Activated CD8-positive, alpha-beta T cell treated with anti-CD3 and anti-CD28 coated beads for 36 hours (primary cell): ENCODE measurements at regions of chr1 and their contacts with region 1.

Region 1: DNA sequence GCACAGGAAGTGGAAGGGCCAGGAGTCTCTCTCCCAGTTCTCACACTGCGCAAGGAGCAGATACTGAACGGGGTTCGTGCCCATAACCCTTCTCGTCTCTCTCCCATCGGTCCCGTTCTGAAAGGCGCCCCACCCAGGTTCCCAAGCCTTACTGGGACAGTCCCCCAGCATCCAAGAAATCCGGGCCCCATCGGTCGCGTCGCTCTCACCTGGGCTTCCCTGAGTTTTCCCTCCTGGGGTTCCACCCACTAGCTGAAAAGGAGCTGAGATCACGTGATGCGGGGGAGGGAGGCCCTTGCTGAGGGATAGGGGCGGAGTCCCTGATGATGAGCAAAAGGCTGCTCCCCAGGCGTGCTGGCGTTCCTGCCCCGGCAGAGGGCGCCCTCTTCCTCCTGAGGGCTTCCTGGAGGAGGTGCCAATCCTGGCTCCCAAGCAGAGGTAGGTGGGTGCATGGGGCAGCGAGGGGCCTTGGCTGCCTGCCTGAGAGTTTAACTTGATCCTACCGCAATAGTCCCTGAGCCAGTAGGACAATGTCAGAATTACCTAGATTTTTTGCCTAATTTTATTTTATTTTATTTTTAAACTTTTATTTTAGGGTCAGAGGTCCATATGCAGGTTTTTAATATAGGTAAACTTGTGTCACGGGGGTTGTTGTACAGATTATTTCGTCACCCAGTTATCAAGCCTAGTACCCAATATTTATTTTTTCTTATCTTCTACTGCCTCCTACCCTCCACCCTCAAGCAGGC is at the start of gene SPOCD1:
- DNase-seq: peak; percentile 89
- ATAC-seq: peak; percentile 93
- H3K4me3 Mint-ChIP-seq: no peak within 1 kb of the TSS
- H3K27ac Mint-ChIP-seq: no peak within 1 kb of the TSS
- H3K4me1 Mint-ChIP-seq: peaks cover 13% of the 10 kb centered on the region
- H3K27me3 Mint-ChIP-seq: no peaks in the 10 kb centered on the region
- CTCF ChIP-seq: peak; percentile 96
- total RNA-seq, gene SPOCD1: not detected

Region 2: DNA sequence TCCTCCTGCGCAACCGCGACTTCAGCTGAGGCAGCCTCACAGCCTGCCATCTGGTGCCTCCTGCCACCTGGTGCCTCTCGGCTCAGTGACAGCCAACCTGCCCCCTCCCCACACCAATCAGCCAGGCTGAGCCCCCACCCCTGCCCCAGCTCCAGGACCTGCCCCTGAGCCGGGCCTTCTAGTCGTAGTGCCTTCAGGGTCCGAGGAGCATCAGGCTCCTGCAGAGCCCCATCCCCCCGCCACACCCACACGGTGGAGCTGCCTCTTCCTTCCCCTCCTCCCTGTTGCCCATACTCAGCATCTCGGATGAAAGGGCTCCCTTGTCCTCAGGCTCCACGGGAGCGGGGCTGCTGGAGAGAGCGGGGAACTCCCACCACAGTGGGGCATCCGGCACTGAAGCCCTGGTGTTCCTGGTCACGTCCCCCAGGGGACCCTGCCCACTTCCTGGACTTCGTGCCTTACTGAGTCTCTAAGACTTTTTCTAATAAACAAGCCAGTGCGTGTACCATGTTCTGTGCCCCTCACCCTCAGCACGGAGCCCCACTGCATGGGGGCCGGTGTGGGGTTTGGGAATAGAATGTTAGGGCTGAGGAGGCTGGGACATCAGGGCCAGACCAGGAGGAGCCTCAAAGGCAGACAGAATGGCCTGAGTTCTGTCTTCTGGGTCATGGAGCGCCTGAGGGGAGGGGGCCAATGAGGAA is 381.6 kb before region 1 on chr1:
- CTCF ChIA-PET with region 1: no interaction called
- POLR2A ChIA-PET with region 1: no interaction called
- intact Hi-C with region 1: no loop called
- DNase-seq: no peak
- ATAC-seq: no peak
- H3K4me3 Mint-ChIP-seq: no peak overlapping the region
- H3K27ac Mint-ChIP-seq: no peak overlapping the region
- H3K4me1 Mint-ChIP-seq: no peaks in the 10 kb centered on the region
- H3K27me3 Mint-ChIP-seq: no peaks in the 10 kb centered on the region
- CTCF ChIP-seq: no peak

Region 3: DNA sequence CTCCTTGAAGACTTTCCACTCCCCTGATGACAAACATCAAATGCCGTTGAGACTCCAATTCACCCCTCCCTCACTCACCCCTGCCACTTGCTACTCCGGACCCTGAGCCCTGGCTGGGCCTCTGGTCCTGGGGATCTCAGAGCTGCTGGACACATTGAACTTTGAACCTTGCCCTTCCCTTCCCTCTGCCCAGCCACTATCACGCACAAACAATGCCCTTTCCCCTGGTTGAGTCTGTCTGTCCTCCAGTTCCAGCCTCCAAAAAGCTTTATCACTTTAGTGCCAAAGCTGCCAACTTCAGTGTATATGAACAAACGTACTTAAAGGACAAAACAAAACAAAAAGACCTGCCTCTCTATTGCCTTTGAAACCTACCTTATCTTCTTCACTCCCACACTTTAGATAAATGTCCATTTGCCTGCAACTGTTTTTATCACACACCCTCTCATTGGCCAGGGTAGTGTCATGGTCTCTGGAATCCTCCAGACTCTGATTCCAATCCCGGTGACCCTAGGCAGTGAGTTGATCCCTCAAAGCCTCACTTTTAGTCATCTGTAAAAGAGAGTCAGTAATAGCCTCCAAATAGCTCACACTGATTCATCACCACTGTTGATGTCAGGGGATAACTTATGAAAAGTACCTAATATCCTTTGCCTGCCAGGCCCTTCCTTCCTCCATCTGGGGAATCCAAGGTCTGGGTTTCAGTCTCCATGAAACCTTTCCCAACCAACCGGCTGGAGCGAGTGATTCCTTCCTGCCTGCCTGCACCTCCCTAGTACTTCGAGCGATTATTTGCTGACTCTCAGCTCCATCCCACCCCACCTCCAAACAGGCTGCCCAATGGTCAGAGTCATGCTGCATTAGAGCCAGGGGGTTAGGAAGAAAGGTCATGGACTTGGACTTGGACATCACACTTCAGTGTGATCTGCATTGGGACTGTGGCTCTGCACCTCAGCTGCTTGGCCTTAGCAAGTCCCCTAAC is 15.8 kb after region 1 on chr1:
- CTCF ChIA-PET with region 1: interaction called, 10 read pairs
- POLR2A ChIA-PET with region 1: interaction called, 4 read pairs
- intact Hi-C with region 1: no loop called
- DNase-seq: no peak
- ATAC-seq: no peak
- H3K4me3 Mint-ChIP-seq: no peak overlapping the region
- H3K27ac Mint-ChIP-seq: no peak overlapping the region
- H3K4me1 Mint-ChIP-seq: peaks cover 24% of the 10 kb centered on the region
- H3K27me3 Mint-ChIP-seq: no peaks in the 10 kb centered on the region
- CTCF ChIP-seq: no peak

Region 4: GRCh38 chr1:31961536-31961935 is 145.6 kb after region 1 on chr1:
- CTCF ChIA-PET with region 1: interaction called, 88 read pairs
- POLR2A ChIA-PET with region 1: interaction called, 4 read pairs
- intact Hi-C with region 1: no loop called
- DNase-seq: no peak
- ATAC-seq: no peak
- H3K4me3 Mint-ChIP-seq: no peak overlapping the region
- H3K27ac Mint-ChIP-seq: peak overlapping the region; percentile 37
- H3K4me1 Mint-ChIP-seq: peaks cover 56% of the 10 kb centered on the region
- H3K27me3 Mint-ChIP-seq: no peaks in the 10 kb centered on the region
- CTCF ChIP-seq: no peak

Region 5: DNA sequence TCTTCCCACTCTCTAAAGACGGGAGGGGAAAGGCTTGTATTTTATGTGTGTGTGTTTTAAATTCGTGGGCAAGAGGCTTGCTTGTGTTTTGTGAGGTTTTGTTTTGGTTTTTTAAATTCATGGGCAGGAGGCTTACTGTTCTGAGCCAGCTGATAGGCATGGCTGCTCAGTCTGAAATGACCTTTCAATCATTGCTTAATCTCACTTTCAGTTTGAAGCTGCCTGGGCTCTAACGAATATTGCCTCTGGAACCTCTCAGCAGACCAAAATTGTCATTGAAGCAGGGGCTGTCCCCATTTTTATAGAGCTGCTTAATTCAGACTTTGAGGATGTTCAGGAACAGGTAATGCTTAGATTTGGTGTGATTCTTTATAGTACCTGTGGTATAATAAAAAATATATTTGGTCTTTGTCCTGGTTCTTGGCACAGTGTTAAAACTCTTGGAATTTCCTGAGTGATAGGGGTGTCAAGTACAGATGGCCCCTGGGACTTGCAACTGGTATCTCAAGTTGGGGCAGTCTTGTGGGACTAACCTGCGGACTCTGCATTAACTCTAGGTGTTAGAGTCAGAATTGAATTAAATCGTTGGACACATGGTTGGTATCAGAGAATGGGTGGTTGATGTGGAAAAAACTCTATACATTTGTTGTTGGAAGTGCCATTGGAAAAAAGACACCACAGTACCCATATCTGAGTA is 343.4 kb after region 1 on chr1:
- CTCF ChIA-PET with region 1: no interaction called
- POLR2A ChIA-PET with region 1: no interaction called
- intact Hi-C with region 1: no loop called
- DNase-seq: peak; percentile 33
- ATAC-seq: peak; percentile 76
- H3K4me3 Mint-ChIP-seq: no peak overlapping the region
- H3K27ac Mint-ChIP-seq: peak overlapping the region; percentile 69
- H3K4me1 Mint-ChIP-seq: peaks cover 5% of the 10 kb centered on the region
- H3K27me3 Mint-ChIP-seq: no peaks in the 10 kb centered on the region
- CTCF ChIP-seq: no peak